Activated CD4-positive, alpha-beta memory T cell treated with anti-CD3 and anti-CD28 coated beads for 36 hours (primary cell): ENCODE measurements at regions of chr1 and their contacts with region 1.

Region 1: GRCh38 chr1:203769505-203770343 is 4.7 kb downstream of the LAX1 start:
- DNase-seq: no peak
- H3K4me3 Mint-ChIP-seq: no peak overlapping the region
- H3K27ac Mint-ChIP-seq: no peak overlapping the region
- H3K4me1 Mint-ChIP-seq: peaks cover 17% of the 10 kb centered on the region
- H3K27me3 Mint-ChIP-seq: no peaks in the 10 kb centered on the region

Region 2: DNA sequence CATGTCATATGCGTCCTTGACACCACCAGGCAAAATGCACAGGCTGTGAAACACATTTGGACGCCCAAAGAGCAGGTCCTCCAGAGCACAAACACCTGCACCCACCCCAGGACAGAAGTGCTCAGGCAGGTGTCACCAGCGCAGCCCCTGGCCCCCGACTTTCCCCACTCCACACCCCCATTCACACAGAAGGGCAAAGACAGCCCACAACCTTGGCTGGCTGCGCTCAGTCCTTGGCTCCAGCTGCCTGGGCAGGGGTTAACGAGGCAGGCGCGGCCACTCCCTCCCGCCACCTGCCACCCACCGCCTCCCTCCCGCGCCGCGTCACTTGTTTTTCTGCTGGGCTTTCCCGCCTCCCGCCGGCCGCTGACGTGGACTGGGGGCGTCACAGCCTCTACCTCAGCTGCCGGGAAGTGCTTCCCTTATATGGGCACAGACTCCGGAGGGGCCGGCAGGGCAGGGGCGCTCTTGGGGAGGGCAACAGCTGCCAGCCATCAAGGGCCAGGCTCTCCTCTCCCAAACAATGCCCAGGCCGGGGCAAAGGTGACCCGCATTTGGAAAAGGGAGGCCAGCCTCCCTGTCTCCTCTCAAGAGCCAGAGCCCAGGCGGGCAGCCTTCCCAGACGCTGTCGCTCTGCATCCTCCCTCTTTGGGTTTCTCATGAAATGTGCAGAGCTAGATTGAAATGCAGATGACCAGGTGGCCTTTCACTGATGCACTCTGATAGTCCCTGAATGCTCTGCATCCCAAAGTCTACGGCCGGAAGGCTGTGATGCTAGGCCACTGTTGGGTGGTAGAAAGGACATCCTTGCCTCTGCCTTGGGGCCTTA is 479.2 kb before region 1 on chr1:
- CTCF ChIA-PET with region 1: no interaction called
- POLR2A ChIA-PET with region 1: interaction called, 7 read pairs
- intact Hi-C with region 1: loop called (anchors 10 kb)
- DNase-seq: peak; percentile 99
- H3K4me3 Mint-ChIP-seq: peak overlapping the region; percentile 82
- H3K27ac Mint-ChIP-seq: peak overlapping the region; percentile 100
- H3K4me1 Mint-ChIP-seq: peaks cover 76% of the 10 kb centered on the region
- H3K27me3 Mint-ChIP-seq: peaks cover 2% of the 10 kb centered on the region

Region 3: GRCh38 chr1:203475012-203475981 is 294.4 kb before region 1 on chr1 and contains the start of gene PRELP:
- CTCF ChIA-PET with region 1: no interaction called
- POLR2A ChIA-PET with region 1: no interaction called
- intact Hi-C with region 1: no loop called
- DNase-seq: no peak
- H3K4me3 Mint-ChIP-seq: no peak within 1 kb of the TSS
- H3K27ac Mint-ChIP-seq: no peak within 1 kb of the TSS
- H3K4me1 Mint-ChIP-seq: no peaks in the 10 kb centered on the region
- H3K27me3 Mint-ChIP-seq: peaks cover 23% of the 10 kb centered on the region
- total RNA-seq, gene PRELP: not detected

Region 4: DNA sequence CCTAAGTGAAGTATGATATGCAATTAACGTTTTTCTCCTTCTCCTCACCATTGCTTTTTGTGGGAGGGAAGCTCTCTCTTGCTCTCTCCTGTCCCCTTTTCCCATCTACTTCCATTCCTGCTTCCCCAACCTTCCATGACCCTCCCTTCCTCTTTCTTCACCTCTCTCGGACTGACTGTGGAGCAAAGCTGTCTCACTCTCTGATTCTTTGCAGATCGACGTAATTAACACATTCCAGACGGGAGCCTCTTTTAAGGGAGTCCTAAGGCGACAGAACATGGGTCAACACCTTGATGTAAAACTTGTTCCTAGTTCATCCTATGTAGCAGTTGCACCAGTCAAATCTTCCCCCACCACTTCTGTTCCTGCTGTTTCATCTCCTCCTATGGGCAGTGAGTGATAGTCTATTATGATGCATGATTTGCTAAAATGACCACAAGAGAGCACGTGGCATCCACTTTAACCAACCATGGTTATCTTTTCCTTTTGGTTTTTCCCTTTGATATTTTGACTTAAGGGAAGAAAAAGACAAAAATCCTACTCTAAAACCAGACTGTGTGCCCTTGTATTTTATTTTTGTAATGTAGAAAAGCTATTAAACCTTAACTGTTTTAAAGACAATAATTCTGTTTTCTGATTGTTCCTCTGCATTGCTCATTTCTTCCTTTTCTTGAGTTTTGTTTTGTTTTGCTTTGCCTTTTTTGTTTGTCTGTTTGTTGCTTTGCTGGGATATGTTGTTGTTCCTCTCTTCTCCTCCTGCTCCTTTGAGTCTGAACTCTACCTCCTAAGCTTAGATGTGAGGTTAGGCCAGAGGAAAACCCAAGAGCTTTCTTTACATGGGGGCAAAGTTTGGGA is 36.5 kb before region 1 on chr1:
- CTCF ChIA-PET with region 1: interaction called, 3 read pairs
- POLR2A ChIA-PET with region 1: no interaction called
- intact Hi-C with region 1: loop called (anchors 5 kb)
- DNase-seq: no peak
- H3K4me3 Mint-ChIP-seq: no peak overlapping the region
- H3K27ac Mint-ChIP-seq: no peak overlapping the region
- H3K4me1 Mint-ChIP-seq: no peaks in the 10 kb centered on the region
- H3K27me3 Mint-ChIP-seq: no peaks in the 10 kb centered on the region

Region 5: DNA sequence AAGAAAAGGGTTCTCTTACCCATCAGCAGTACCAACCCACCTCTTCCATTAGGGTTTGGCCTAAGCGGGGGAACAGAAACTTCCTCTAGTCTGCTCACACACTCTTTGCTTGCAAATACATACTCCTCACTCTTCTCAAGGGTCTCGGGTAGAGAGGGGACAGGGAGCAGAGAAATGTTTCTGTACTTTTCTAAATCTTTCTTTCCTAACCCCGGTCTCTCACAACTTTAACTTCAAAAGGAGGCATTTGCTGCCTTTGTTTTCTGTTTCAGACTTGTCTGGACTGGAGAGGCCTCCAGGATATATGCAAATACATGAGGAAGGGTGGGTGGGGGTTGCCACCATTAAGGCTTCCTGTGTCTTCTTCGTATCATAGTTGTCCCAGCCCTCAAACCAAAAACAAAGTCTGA is 15.3 kb before region 1 on chr1:
- CTCF ChIA-PET with region 1: no interaction called
- POLR2A ChIA-PET with region 1: interaction called, 7 read pairs
- intact Hi-C with region 1: loop called (anchors 1 kb)
- DNase-seq: peak; percentile 48
- H3K4me3 Mint-ChIP-seq: peak overlapping the region; percentile 36
- H3K27ac Mint-ChIP-seq: peak overlapping the region; percentile 90
- H3K4me1 Mint-ChIP-seq: peaks cover 32% of the 10 kb centered on the region
- H3K27me3 Mint-ChIP-seq: no peaks in the 10 kb centered on the region

Region 6: DNA sequence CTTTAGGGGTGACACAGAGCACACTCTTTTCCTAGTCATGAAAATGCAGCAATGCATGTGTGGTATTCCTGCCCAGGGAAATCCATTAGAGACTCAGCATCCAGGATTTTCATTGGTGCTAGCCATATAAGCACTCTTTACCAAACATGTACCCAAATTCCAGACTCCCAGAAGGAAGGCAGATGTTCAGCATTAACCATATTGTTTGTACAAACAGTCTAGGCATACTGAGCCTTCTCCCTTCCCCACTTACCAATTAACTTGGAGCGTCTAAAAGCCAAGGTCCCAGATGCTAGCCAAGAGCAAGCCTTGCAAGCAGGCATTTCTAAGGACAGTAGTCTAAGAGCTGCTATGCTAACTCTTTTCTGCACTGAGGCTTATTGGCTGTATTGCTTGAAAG is 53.6 kb after region 1 on chr1:
- CTCF ChIA-PET with region 1: no interaction called
- POLR2A ChIA-PET with region 1: interaction called, 4 read pairs
- intact Hi-C with region 1: loop called (anchors 10 kb)
- DNase-seq: no peak
- H3K4me3 Mint-ChIP-seq: no peak overlapping the region
- H3K27ac Mint-ChIP-seq: no peak overlapping the region
- H3K4me1 Mint-ChIP-seq: peaks cover 25% of the 10 kb centered on the region
- H3K27me3 Mint-ChIP-seq: no peaks in the 10 kb centered on the region